ENCODE measurements at regions of chr3 and their contacts with region 1.

Region 1: GRCh38 chr3:194682694-194683310 is 2.9 kb upstream of the FAM43A start:
- DNase-seq: peak; percentile 88 to 93 (median 88)
- H3K4me3 ChIP-seq: peak overlapping the region in 1 of 3 donors; percentile 9
- H3K27ac ChIP-seq: no peak overlapping the region
- H3K4me1 ChIP-seq: peaks cover 0 to 20% (median 0%) of the 10 kb centered on the region in 3 donors
- H3K27me3 ChIP-seq: no peaks in the 10 kb centered on the region
- CTCF ChIP-seq: peak; percentile 90

Region 2: GRCh38 chr3:194906970-194907629 is 224.3 kb after region 1 on chr3:
- intact Hi-C with region 1: no loop called
- DNase-seq: no peak
- H3K4me3 ChIP-seq: no peak overlapping the region
- H3K27ac ChIP-seq: no peak overlapping the region
- H3K4me1 ChIP-seq: no peaks in the 10 kb centered on the region
- H3K27me3 ChIP-seq: no peaks in the 10 kb centered on the region
- CTCF ChIP-seq: no peak

Region 3: DNA sequence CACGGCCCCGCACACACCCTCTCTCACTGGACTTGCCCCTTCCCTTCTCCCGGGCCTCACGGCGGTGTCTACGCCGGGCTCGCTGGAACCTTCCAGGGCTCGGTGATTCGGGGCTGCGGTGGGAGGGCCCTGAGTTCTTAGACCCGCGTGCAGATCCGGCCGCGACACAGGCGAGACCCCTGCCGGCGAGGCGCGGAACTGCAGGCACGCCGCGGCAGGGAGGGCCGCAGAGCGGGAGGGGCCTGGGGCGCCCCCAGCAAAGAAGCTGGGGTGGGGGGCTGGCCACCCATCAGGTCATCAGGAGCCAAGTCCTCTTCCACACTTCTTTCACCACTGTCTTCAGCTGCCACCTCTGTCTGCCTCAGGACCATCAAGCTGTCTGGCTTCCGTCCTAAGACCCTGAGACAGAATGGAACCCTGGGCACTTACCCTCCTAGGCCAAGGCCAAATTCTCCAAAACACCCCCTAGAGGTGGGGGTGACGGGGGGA is 423.7 kb after region 1 on chr3:
- intact Hi-C with region 1: loop called (anchors 10 kb)
- DNase-seq: peak; percentile 66 to 85 (median 81)
- H3K4me3 ChIP-seq: no peak overlapping the region
- H3K27ac ChIP-seq: no peak overlapping the region
- H3K4me1 ChIP-seq: peaks cover 0 to 16% (median 4%) of the 10 kb centered on the region in 3 donors
- H3K27me3 ChIP-seq: no peaks in the 10 kb centered on the region
- CTCF ChIP-seq: peak; percentile 99

Region 4: DNA sequence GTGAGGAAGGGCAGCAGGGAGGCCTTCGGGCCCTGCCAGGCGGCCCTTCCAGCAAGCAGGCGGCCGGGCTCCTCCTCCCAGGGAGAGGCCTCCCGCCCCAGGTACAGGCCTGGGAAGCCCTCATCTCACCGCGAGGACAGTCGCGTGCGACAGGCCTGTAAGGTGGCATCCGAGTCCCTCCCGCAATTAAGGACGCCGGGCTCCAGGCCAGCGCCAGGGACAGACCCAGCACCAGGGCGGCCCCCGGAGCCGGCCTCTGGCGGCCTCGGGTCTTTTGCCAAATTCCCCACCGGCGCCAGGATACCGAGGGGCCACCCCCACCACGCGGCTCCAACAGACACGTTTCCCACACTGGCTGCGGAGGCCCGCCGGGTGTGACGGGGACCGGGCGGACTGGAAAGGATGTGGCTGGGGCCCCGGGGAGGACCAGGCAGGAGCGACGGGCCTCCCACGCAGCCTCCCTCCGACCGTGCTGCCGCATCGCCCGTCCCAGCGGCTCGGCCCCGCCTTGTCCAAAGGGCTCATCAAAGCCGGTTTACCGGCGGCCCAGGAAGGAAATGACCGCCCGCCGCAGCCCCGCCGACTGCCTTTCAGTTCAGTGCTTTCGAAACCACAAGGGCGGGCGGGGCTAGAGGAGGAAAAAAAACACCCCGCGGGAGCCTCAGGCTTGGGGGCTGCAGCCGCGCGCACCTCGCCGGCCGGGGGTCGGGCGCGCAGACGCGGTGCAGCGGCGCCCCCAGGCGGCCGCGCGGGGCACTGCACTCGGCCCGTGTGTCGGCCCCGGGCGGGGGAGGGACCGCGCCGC is 576.9 kb after region 1 on chr3:
- intact Hi-C with region 1: loop called (anchors 5 kb)
- DNase-seq: peak; percentile 94 to 97 (median 96)
- H3K4me3 ChIP-seq: peak overlapping the region; percentile 26 to 57 (median 28)
- H3K27ac ChIP-seq: peak overlapping the region; percentile 78 to 88
- H3K4me1 ChIP-seq: peaks cover 0 to 12% (median 12%) of the 10 kb centered on the region in 3 donors
- H3K27me3 ChIP-seq: no peaks in the 10 kb centered on the region
- CTCF ChIP-seq: peak; percentile 79